ENCODE measurements at regions of chr14 and their contacts with region 1.

Region 1: GRCh38 chr14:69242311-69243224 is 17.4 kb upstream of the GALNT16 start:
- DNase-seq: peak; percentile 62
- H3K4me3 Mint-ChIP-seq: no peak overlapping the region
- H3K27ac Mint-ChIP-seq: no peak overlapping the region
- H3K4me1 Mint-ChIP-seq: no peaks in the 10 kb centered on the region
- H3K27me3 Mint-ChIP-seq: no peaks in the 10 kb centered on the region

Region 2: GRCh38 chr14:69252851-69253250 is 10.3 kb after region 1 on chr14:
- CTCF ChIA-PET with region 1: interaction called, 10 read pairs
- POLR2A ChIA-PET with region 1: no interaction called
- intact Hi-C with region 1: no loop called
- DNase-seq: no peak
- H3K4me3 Mint-ChIP-seq: no peak overlapping the region
- H3K27ac Mint-ChIP-seq: no peak overlapping the region
- H3K4me1 Mint-ChIP-seq: no peaks in the 10 kb centered on the region
- H3K27me3 Mint-ChIP-seq: no peaks in the 10 kb centered on the region

Region 3: DNA sequence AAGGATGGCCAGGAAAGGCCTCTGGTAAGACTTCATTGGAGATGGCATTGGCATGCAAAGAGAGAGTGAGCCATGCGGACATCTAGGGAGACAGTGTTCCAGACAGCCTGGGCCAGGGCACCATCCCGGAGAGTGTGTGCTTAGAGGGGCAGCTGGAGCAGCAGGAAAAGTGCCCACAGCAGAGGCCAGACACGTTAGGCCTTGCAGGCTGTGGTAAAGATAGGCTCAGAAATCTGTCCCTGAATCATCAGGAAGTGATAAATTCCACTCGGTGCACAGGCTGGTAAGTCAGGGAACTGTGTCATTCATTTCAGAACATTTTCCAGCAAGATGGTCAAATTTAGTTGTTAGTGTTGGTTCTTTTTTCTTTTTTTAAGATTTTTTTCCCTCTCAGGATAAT is 26.2 kb after region 1 on chr14:
- CTCF ChIA-PET with region 1: no interaction called
- POLR2A ChIA-PET with region 1: no interaction called
- intact Hi-C with region 1: no loop called
- DNase-seq: no peak
- H3K4me3 Mint-ChIP-seq: no peak overlapping the region
- H3K27ac Mint-ChIP-seq: no peak overlapping the region
- H3K4me1 Mint-ChIP-seq: no peaks in the 10 kb centered on the region
- H3K27me3 Mint-ChIP-seq: peaks cover 2% of the 10 kb centered on the region